ENCODE measurements at regions of chr10 and their contacts with region 1.

Region 1: DNA sequence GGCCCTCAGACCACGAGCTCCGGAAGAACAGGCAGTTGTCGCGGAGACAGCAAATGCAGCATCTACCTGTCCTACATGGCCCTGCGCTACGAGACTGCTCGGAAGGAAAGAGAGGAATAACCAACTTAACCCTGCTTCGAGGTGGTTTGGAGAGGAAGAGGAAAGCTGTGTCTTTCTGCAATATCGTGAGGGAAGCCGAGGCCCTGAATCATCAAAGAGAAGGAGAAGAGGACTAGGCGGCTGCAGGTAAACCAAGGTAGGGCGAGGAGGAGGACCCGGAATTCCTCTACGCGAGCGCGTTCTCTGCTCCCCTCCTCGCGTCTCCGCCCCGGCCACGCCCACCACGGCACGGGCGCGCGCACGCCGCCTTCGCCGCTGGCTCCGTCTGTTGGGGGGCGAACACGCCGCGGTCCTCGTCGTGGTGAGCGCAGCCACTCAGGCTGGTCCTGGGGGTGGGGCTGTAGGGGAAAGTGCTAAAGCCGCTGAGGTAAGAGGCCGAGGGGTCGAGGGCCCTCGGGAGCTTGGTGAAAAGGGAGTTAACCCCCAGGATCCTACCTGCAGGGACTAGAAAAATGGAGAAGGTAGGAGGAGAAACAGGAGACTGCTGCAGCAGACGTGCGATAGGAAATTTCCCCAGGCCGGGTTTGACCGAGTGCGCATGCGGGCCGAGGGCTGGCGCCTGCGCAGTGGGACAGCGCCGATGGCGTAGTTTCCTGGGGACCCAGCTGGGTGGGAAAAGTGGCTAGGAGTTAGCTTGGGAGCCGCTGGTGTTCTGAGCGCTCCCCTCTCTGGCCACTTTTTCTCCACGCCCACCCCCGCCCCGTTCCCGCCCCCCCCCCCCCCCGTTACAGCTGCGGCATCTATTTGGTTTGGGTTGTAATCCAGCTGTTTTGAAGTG is at the starts of genes ANAPC16 and ASCC1:
- DNase-seq: peak; percentile 96
- ATAC-seq: peak; percentile 77
- H3K4me3 Mint-ChIP-seq: peak within 1 kb of the TSS; percentile 91
- H3K27ac Mint-ChIP-seq: peak within 1 kb of the TSS; percentile 97
- H3K4me1 Mint-ChIP-seq: peaks cover 48% of the 10 kb centered on the region
- H3K27me3 Mint-ChIP-seq: no peaks in the 10 kb centered on the region
- total RNA-seq, gene ANAPC16: 90.2 to 123 TPM
- total RNA-seq, gene ASCC1: 67.8 to 68.9 TPM

Region 2: GRCh38 chr10:71671994-71672946 is 543.6 kb before region 1 on chr10:
- CTCF ChIA-PET with region 1: no interaction called
- POLR2A ChIA-PET with region 1: no interaction called
- intact Hi-C with region 1: no loop called
- DNase-seq: no peak
- ATAC-seq: no peak
- H3K4me3 Mint-ChIP-seq: no peak overlapping the region
- H3K27ac Mint-ChIP-seq: no peak overlapping the region
- H3K4me1 Mint-ChIP-seq: peaks cover 6% of the 10 kb centered on the region
- H3K27me3 Mint-ChIP-seq: no peaks in the 10 kb centered on the region

Region 3: DNA sequence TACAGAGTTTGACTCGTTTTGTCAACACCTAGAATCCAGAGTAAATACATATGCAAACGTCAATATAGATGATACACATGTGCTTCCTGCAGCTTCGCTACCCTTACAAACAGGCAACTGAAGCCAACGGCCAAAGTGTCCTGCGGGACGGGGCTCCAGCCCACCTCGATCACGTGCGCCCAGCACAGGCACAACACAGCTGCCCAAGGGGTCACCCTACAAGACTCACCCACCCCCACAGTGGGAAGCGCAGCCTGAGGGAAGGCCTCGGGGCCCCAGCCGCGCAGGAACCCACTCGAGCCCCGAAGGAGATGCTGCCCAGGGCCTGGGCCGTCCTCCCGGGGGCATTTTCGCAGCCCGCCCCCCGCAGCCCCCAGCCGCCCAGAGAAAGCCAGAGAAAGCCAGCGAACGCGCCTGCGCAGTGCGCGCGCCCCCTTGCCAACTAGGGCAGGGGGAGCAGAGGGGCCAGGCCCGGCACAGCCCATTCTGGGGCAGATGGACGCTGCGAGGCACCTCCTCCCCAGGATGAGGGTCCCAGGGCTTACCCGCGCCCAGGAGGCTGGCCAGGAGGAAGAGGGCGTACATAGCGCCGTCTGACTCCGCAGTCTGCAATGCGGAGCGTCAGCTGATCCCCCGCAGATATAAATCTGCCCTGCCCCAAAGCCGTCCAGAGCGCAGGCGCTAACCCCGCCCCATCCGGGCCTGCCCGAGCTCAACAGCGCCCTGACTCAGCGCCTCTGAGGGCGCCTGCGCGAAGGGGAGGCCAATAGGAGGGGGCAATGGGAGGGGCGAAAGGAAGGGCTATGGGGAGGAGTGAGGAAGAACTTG is 365.1 kb before region 1 on chr10 and contains the start of gene PSAP:
- CTCF ChIA-PET with region 1: no interaction called
- POLR2A ChIA-PET with region 1: no interaction called
- intact Hi-C with region 1: loop called in 1 of 2 experiments (anchors 1 kb)
- DNase-seq: peak; percentile 99
- ATAC-seq: peak; percentile 99
- H3K4me3 Mint-ChIP-seq: peak within 1 kb of the TSS; percentile 90
- H3K27ac Mint-ChIP-seq: peak within 1 kb of the TSS; percentile 72
- H3K4me1 Mint-ChIP-seq: peaks cover 47% of the 10 kb centered on the region
- H3K27me3 Mint-ChIP-seq: no peaks in the 10 kb centered on the region
- total RNA-seq, gene PSAP: 100 to 109 TPM

Region 4: GRCh38 chr10:72162978-72163377 is 52.9 kb before region 1 on chr10:
- CTCF ChIA-PET with region 1: interaction called, 3 read pairs
- POLR2A ChIA-PET with region 1: no interaction called
- intact Hi-C with region 1: loop called (anchors 1 kb)
- DNase-seq: peak; percentile 25
- ATAC-seq: peak; percentile 94
- H3K4me3 Mint-ChIP-seq: no peak overlapping the region
- H3K27ac Mint-ChIP-seq: peak overlapping the region; percentile 85
- H3K4me1 Mint-ChIP-seq: peaks cover 35% of the 10 kb centered on the region
- H3K27me3 Mint-ChIP-seq: no peaks in the 10 kb centered on the region

Region 5: GRCh38 chr10:72292223-72292691 is 76.4 kb after region 1 on chr10:
- CTCF ChIA-PET with region 1: interaction called, 6 read pairs
- POLR2A ChIA-PET with region 1: interaction called, 14 read pairs
- intact Hi-C with region 1: loop called (anchors 1 to 2 kb)
- DNase-seq: peak; percentile 84
- ATAC-seq: peak; percentile 57
- H3K4me3 Mint-ChIP-seq: peak overlapping the region; percentile 56
- H3K27ac Mint-ChIP-seq: peak overlapping the region; percentile 99
- H3K4me1 Mint-ChIP-seq: peaks cover 63% of the 10 kb centered on the region
- H3K27me3 Mint-ChIP-seq: no peaks in the 10 kb centered on the region

Region 6: DNA sequence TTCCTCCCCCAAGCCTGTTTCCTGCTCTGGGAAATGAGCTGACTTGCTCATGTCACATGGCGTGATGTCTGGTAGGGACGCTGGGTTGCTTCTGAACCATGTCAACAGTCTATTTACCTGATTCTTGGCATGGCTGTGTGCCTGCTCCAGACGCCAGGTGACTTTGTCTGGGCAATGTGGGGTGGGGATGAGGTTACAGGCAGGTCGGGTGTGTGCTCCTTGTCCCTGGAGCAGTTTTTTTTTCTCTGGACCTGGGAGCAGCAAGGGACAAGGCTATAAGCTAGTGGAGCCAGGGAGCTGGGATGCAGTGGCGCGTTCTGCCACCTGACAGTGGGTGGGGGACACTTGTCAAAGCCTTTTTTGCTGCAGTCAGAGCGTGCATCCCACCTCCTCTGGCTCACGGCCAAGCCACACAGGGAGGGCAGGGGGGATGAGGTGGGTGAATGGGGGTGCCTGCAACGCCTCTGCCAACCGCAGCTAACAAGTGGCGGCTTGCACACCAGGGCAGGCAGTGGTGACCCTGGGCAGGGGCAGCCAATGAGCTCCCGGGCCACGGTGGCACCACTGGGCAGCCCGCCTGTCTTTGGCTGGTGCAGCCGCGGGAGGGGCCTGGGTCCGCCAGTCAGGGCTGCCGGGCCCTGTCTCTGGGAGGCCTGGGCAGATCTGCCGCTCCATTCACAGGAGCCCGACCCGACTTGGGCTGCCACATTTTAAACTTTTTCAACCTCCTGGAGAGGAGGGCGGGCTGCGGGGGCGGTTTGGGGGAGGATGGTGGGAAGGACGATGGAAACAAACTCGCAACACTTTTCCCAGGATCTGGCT is 115.9 kb after region 1 on chr10:
- CTCF ChIA-PET with region 1: interaction called, 13 read pairs
- POLR2A ChIA-PET with region 1: interaction called, 11 read pairs
- intact Hi-C with region 1: loop called (anchors 1 to 2 kb)
- DNase-seq: peak; percentile 97
- ATAC-seq: peak; percentile 70
- H3K4me3 Mint-ChIP-seq: peak overlapping the region; percentile 94
- H3K27ac Mint-ChIP-seq: peak overlapping the region; percentile 99
- H3K4me1 Mint-ChIP-seq: peaks cover 89% of the 10 kb centered on the region
- H3K27me3 Mint-ChIP-seq: no peaks in the 10 kb centered on the region

Region 7: GRCh38 chr10:72625608-72626443 is 409.9 kb after region 1 on chr10 and contains the start of gene MICU1:
- CTCF ChIA-PET with region 1: no interaction called
- POLR2A ChIA-PET with region 1: no interaction called
- intact Hi-C with region 1: loop called in 1 of 2 experiments (anchors 2 kb)
- DNase-seq: peak; percentile 98
- ATAC-seq: peak; percentile 99
- H3K4me3 Mint-ChIP-seq: peak within 1 kb of the TSS; percentile 94
- H3K27ac Mint-ChIP-seq: peak within 1 kb of the TSS; percentile 91
- H3K4me1 Mint-ChIP-seq: peaks cover 7% of the 10 kb centered on the region
- H3K27me3 Mint-ChIP-seq: no peaks in the 10 kb centered on the region
- total RNA-seq, gene MICU1: 41.0 to 51.5 TPM

Measured in activated CD4-positive, alpha-beta T cell treated with anti-CD3 and anti-CD28 coated beads for 36 hours (primary cell).